ENCODE measurements at regions of chr17 and their contacts with region 1.

Region 1: GRCh38 chr17:48655913-48656312 is 29.8 kb upstream of the HOXB9 start:
- DNase-seq: no peak
- H3K4me3 ChIP-seq: no peak overlapping the region
- H3K27ac ChIP-seq: no peak overlapping the region
- H3K4me1 ChIP-seq: no peaks in the 10 kb centered on the region
- H3K27me3 ChIP-seq: no peaks in the 10 kb centered on the region
- CTCF ChIP-seq: no peak

Region 2: DNA sequence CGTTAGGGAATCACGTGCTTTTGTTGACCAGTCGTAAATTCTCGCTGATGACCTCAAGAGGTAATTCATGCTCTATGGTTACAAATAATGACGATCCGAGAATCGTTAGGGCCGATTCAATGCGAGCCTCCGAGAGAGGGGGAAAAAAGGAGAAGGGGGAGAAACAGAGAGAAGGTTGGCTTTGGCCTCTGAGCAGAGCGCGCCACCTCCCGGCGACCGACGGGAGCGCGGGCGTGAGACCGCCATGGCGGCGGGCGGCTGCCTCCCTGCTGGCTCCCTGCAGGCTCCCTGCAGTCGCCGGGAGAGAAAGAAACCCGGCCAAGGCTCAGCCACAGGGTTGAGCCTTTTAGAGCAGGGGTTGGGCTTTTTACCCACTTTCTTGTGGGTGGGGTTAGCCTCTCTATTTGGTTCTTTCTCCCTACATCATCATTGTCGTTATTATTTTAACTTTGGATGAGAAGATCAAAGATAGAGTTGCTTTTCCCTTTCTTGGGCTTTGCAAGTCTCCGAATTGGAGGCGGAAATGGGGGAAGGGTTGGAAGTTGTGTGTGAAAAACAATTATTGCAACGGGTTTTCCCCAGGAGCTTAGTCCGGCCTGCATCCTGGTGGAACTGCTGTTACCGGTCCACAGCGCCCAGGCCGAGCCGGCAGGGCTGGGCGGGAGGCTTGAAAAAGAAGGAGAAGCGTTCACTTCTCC is 61.9 kb before region 1 on chr17:
- intact Hi-C with region 1: no loop called
- DNase-seq: peak; percentile 72
- H3K4me3 ChIP-seq: no peak overlapping the region
- H3K27ac ChIP-seq: peak overlapping the region; percentile 63
- H3K4me1 ChIP-seq: peaks cover 4% of the 10 kb centered on the region
- H3K27me3 ChIP-seq: no peaks in the 10 kb centered on the region
- CTCF ChIP-seq: peak; percentile 74

Region 3: DNA sequence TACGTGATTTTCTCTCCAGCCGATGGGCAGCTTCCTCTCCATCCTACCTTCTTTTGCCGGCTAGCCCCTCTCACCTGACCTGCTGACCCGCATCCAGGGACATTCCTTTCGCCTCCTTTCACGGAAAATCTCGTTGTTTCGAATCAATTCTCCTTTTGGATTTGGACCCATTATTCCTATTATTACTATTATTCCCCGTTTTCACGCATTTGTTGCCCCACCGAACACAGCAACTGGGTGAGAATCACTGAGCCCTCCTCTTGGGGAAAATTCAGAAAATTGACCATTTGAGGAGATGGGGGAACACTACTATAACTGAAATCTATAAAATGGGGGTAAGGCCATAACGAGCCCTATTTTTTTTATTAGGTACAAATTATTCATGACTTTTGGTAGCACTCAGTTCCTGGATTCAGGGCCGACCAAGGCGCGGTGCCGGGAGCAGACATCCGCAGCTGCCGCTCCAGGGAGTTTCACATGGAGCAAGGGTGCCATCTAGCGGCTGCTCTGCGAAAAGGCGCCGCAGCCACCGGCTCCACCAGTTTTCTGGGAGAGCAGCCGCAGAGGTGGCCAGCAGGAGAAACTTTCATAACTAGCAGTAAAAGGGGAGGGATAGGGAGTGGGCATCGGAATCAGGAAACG is 37.5 kb before region 1 on chr17:
- intact Hi-C with region 1: no loop called
- DNase-seq: peak; percentile 93
- H3K4me3 ChIP-seq: peak overlapping the region; percentile 15
- H3K27ac ChIP-seq: peak overlapping the region; percentile 62
- H3K4me1 ChIP-seq: peaks cover 13% of the 10 kb centered on the region
- H3K27me3 ChIP-seq: peaks cover 45% of the 10 kb centered on the region
- CTCF ChIP-seq: peak; percentile 98

Region 4: GRCh38 chr17:49277638-49278037 is 621.7 kb after region 1 on chr17:
- intact Hi-C with region 1: loop called (anchors 5 kb)
- DNase-seq: no peak
- H3K4me3 ChIP-seq: no peak overlapping the region
- H3K27ac ChIP-seq: no peak overlapping the region
- H3K4me1 ChIP-seq: no peaks in the 10 kb centered on the region
- H3K27me3 ChIP-seq: no peaks in the 10 kb centered on the region
- CTCF ChIP-seq: no peak

Measured in colonic mucosa (tissue), 4 donors.